ENCODE measurements at regions of chr12 and their contacts with region 1.

Region 1: GRCh38 chr12:109927622-109928021 is 27.5 kb downstream of the TCHP start:
- DNase-seq: peak; percentile 48
- ATAC-seq: no peak
- H3K4me3 ChIP-seq: no peak overlapping the region
- H3K4me3 Mint-ChIP-seq: no peak overlapping the region
- H3K27ac ChIP-seq: no peak overlapping the region
- H3K27ac Mint-ChIP-seq: peak overlapping the region; percentile 68
- H3K4me1 ChIP-seq: peaks cover 0 to 8% of the 10 kb centered on the region in 2 donors
- H3K4me1 Mint-ChIP-seq: peaks cover 12% of the 10 kb centered on the region
- H3K27me3 ChIP-seq: no peaks in the 10 kb centered on the region
- H3K27me3 Mint-ChIP-seq: no peaks in the 10 kb centered on the region
- CTCF ChIP-seq: peak; percentile 57

Region 2: DNA sequence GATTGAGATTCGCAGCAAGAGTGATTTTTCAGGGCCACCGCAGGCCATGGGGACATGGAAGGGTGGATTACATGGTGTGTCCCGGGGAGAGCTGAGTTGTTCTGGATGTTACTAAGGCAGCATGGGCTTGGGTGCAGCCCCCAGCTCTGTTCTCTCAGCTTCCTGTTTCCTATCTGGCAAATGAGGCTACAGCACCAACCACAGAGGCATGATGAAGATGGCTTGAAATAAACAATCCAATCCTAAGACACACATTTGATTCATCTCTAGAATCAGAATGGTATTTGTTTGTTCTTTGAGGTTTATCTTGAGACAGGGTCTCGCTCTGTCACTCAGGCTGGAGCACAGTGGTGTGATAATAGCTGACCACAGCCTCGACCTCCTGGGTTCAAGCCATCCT is 68.9 kb before region 1 on chr12:
- CTCF ChIA-PET with region 1: interaction called, 39 read pairs
- POLR2A ChIA-PET with region 1: no interaction called
- intact Hi-C with region 1: no loop called
- DNase-seq: no peak
- ATAC-seq: no peak
- H3K4me3 ChIP-seq: no peak overlapping the region
- H3K4me3 Mint-ChIP-seq: no peak overlapping the region
- H3K27ac ChIP-seq: no peak overlapping the region
- H3K27ac Mint-ChIP-seq: no peak overlapping the region
- H3K4me1 ChIP-seq: no peaks in the 10 kb centered on the region
- H3K4me1 Mint-ChIP-seq: peaks cover 2% of the 10 kb centered on the region
- H3K27me3 ChIP-seq: no peaks in the 10 kb centered on the region
- H3K27me3 Mint-ChIP-seq: no peaks in the 10 kb centered on the region
- CTCF ChIP-seq: no peak

Measured in B cell (primary cell).